Posterior cingulate gyrus (tissue), 11 donors: ENCODE measurements at regions of chr2 and their contacts with region 1.

Region 1: GRCh38 chr2:70789304-70790135 is 923 bp downstream of the FIGLA start:
- DNase-seq: peak; percentile 48 to 96 (median 74)

Region 2: DNA sequence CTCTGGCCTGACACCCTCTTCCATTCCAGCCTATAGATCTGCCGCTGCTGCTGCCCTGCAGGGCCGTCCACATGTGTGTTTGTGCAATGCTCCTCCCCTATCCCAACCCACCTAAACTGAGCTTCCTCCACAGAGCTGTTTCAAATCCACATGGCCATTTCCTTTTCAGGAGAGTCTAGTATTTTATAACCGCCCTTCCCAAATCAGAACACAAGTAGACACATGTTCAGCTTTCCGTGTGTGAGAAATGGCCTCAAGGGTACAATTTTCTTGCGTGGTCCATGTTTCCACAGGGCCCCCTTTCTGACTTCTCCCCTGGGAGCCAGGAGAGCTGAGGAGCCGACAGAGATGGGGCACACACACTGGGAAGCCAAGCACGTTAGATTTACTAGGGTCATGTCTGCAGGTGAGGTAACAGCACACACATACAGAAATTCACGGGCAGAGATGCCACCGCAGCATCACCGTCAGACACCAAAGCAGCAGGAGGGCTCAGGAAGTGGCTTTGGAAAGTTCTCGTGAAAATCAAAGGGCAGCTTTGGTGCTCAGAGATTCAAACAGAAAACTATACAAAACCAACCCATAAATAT is 133.0 kb before region 1 on chr2:
- intact Hi-C with region 1: loop called (anchors 1 kb)
- DNase-seq: no peak

Region 3: GRCh38 chr2:70851704-70852103 is 62.2 kb after region 1 on chr2:
- intact Hi-C with region 1: loop called (anchors 10 kb)
- DNase-seq: no peak

Region 4: GRCh38 chr2:70948337-70949003 is 158.9 kb after region 1 on chr2:
- intact Hi-C with region 1: loop called (anchors 1 kb)
- DNase-seq: peak; percentile 51 to 95 (median 81)

Region 5: DNA sequence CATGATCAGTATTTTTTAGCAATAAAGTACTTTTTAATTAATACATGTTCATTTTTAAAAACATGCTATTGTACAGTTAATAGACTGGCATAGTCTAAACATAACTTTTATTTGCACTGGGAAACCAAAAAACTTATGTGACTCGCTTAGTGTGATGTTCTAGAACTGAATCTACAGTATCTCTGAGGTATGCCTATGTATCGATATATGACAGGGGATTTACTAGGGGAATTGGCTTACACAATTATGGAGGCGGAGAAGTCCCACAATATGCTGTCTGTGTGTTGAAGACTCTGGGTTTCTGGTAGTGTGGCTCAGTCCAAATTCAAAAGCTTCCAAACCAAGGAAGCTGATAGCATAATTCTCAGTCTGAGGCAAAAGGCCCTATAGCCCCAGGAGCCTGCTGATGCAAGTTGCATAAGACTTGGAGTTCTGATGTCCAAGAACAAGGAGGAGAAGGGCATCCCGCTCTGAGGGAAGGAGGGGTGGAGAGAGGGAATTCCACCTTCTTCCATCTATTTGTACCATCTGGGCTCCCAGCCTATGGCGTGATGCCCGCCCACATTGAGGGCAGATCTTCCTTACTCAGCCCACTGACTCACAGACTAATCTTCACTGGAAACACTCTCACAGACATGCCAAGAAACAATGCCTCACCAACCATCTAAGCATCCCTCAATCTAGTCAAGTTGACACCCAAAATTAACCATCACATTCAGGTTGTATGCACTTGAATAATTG is 569.6 kb after region 1 on chr2:
- intact Hi-C with region 1: no loop called
- DNase-seq: peak in 3 of 10 donors; percentile 55 to 89 (median 75)